ENCODE measurements at regions of chr4 and their contacts with region 1.

Region 1: DNA sequence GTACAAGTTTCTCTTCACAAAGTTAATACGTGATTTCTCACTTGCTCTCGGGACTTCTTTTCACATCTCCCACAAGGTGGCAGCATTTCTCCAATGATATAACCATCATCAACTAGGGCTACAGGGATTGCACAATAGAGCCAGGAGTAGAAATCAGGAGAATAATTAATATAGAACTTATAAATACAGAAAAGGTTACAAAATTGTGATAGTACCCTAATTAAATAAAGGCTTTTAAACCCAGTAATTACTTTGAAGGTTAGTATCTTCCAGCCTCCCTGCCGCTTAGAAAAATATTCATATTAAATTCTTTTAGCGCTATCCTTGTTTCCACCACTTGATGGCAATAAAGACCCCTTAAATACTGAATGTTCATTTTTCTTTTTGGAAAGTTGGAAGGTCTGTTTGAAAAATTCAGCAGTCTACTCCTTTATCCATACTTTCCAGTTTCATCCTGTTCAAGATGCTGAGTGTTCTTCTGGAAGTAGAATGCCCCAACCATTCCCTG is 65.8 kb downstream of the RASGEF1B start:
- DNase-seq: peak; percentile 71
- H3K4me3 ChIP-seq: no peak overlapping the region
- H3K27ac ChIP-seq: no peak overlapping the region
- H3K4me1 ChIP-seq: peaks cover 3% of the 10 kb centered on the region
- H3K27me3 ChIP-seq: no peaks in the 10 kb centered on the region
- CTCF ChIP-seq: peak; percentile 66

Region 2: DNA sequence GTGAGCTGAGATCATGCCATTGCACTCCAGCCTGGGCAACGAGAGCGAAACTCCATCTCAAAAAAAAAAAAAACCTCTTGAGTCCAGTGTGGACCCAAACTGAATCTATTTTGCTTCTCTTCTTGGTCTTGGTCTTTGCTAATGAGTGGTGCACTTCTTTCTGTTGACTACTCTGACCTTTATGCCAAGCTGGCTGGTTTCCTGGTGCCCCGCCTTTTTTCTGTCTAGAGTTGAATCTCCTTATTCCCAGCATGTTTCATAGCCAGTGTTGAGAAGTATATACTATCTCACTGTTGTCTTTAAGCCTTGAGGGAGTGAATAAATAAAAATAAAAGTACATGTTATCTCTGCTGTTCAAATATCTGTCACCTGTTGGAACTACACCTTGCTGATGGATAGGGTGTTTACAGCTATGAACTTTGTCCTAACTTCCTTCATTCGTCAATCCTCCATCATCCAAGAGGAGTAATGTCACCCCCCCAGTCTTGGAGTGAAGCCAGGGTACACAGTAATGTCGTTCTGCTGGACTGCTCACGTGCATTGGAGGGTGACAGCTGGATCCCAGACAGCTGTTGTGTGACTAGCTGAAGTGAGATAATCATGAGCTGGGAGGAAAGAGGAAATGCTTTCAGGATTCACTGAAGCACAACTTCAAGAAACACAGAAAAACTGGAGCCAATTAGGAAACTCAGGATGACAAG is 91.6 kb before region 1 on chr4:
- CTCF ChIA-PET with region 1: no interaction called
- POLR2A ChIA-PET with region 1: no interaction called
- intact Hi-C with region 1: no loop called
- DNase-seq: peak; percentile 44
- H3K4me3 ChIP-seq: no peak overlapping the region
- H3K27ac ChIP-seq: no peak overlapping the region
- H3K4me1 ChIP-seq: no peaks in the 10 kb centered on the region
- H3K27me3 ChIP-seq: no peaks in the 10 kb centered on the region
- CTCF ChIP-seq: no peak

Region 3: DNA sequence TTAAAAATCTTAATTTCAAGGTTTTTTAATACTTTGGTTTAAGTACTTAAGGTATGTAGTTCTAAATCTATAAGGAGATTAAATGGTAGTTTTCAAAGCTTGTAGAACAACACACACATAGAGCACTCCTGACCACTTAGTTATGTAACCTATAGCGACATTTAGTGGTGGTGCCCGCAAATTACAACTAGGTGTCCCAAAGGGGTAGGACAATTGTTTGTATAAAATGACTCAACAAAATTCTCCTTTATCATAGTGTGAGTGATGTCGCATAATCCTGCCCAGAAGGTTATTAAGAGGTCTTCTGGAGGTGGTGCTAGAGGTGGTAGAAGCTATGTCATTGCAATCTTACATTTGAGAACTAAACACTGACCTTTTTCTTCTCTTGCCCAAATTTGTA is 438.8 kb after region 1 on chr4:
- CTCF ChIA-PET with region 1: interaction called, 3 read pairs
- POLR2A ChIA-PET with region 1: interaction called, 3 read pairs
- intact Hi-C with region 1: loop called (anchors 1 kb)
- DNase-seq: peak; percentile 75
- H3K4me3 ChIP-seq: no peak overlapping the region
- H3K27ac ChIP-seq: no peak overlapping the region
- H3K4me1 ChIP-seq: peaks cover 6% of the 10 kb centered on the region
- H3K27me3 ChIP-seq: no peaks in the 10 kb centered on the region
- CTCF ChIP-seq: peak; percentile 65

Region 4: GRCh38 chr4:82171531-82172155 is 765.7 kb after region 1 on chr4:
- CTCF ChIA-PET with region 1: no interaction called
- POLR2A ChIA-PET with region 1: interaction called, 3 read pairs
- intact Hi-C with region 1: loop called (anchors 10 kb)
- DNase-seq: peak; percentile 83
- H3K4me3 ChIP-seq: no peak overlapping the region
- H3K27ac ChIP-seq: peak overlapping the region; percentile 93
- H3K4me1 ChIP-seq: peaks cover 13% of the 10 kb centered on the region
- H3K27me3 ChIP-seq: no peaks in the 10 kb centered on the region
- CTCF ChIP-seq: no peak

Region 5: GRCh38 chr4:82201805-82202641 is 796.1 kb after region 1 on chr4:
- CTCF ChIA-PET with region 1: no interaction called
- POLR2A ChIA-PET with region 1: no interaction called
- intact Hi-C with region 1: loop called (anchors 1 kb)
- DNase-seq: peak; percentile 80
- H3K4me3 ChIP-seq: no peak overlapping the region
- H3K27ac ChIP-seq: no peak overlapping the region
- H3K4me1 ChIP-seq: no peaks in the 10 kb centered on the region
- H3K27me3 ChIP-seq: no peaks in the 10 kb centered on the region
- CTCF ChIP-seq: peak; percentile 70

Region 6: DNA sequence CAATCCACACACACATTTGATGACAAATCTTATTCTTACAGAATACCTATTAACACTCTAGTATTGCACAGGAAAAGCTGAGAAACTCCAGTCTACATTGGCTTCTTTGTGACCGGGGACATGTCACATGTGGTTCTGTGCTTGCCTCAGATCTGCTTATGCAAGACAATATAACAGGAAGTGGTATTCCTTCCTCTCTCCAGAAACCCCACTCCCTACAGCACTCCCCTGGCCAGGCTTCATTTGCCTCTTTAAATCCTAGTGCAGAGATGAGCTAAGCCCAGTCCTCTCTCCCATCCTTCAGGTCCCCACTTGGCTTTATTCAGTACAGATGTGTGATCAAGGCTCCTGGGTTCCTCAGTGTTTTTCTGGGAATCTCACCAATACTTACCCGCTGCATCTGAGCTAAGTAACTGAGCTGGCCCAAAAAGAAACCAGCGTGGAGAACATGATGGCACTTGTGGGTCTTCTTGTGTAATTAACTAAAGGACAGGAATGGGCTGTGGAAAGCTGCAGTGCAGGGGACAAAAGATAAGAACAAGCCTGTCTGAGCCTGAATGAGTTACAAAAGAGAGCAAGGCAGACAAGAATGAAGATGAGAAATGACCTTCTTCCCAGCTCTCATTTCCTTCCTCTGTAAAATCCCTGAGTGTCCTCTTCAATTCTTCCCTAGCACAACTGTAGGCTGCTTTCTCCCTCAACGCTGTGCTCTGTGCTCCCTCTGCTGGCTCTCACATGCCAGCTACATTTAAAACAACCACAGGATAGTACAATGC is 862.3 kb after region 1 on chr4:
- CTCF ChIA-PET with region 1: no interaction called
- POLR2A ChIA-PET with region 1: no interaction called
- intact Hi-C with region 1: loop called (anchors 2 kb)
- DNase-seq: peak; percentile 80
- H3K4me3 ChIP-seq: no peak overlapping the region
- H3K27ac ChIP-seq: peak overlapping the region; percentile 70
- H3K4me1 ChIP-seq: peaks cover 11% of the 10 kb centered on the region
- H3K27me3 ChIP-seq: no peaks in the 10 kb centered on the region
- CTCF ChIP-seq: peak; percentile 74

Region 7: DNA sequence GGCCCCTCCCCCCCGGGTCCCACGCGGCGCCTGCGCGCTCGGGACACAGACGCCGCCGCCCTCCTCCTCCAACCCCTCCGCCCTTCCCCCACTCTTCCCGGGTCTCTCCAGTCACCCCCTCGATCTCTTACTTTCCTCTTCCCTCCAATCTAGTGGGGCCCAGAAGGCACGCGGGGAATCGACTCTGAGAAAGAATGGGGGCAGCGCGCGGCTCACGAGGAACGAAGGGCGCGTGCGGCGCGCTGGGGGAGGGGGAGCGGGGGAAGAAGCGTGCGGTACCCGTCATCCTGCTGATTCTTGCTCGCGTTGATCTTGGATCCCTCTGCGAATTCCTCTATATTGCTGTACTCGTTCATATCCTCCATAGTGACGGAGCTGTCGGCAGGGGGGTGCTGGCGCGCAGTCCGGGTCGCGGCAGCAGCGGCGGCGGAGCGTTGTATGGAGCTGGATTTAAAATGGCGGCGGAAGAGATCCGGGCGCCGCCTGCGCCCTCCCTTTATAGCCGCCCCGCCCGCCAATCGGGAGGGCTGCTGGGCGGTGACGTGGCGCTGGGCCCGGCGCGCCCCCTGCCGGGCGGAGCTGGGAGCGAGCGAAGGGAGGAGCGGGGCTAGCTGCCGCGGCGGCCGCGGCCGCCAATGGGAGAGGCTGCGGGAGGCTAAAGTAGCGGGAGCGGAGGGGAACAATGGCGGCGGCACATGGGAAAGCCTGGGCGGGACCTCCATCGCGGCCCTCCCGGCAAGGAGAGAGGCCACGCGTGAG is 1023.2 kb after region 1 on chr4:
- CTCF ChIA-PET with region 1: no interaction called
- POLR2A ChIA-PET with region 1: no interaction called
- intact Hi-C with region 1: loop called (anchors 10 kb)
- DNase-seq: peak; percentile 89
- H3K4me3 ChIP-seq: peak overlapping the region; percentile 88
- H3K27ac ChIP-seq: peak overlapping the region; percentile 99
- H3K4me1 ChIP-seq: no peaks in the 10 kb centered on the region
- H3K27me3 ChIP-seq: no peaks in the 10 kb centered on the region
- CTCF ChIP-seq: peak; percentile 58

Measured in A673 (cell line).